Sigmoid colon (tissue), 7 donors: ENCODE measurements at regions of chr11 and their contacts with region 1.

Region 1: GRCh38 chr11:95067039-95067840 is 521 bp downstream of the SRSF8 start:
- DNase-seq: peak; percentile 93
- H3K4me3 ChIP-seq: peak overlapping the region; percentile 71 to 83 (median 80)
- H3K27ac ChIP-seq: peak overlapping the region; percentile 91 to 99 (median 98)
- H3K4me1 ChIP-seq: peaks cover 0 to 20% (median 17%) of the 10 kb centered on the region in 4 donors
- H3K27me3 ChIP-seq: no peaks in the 10 kb centered on the region
- CTCF ChIP-seq: peak; percentile 52 to 74 (median 64)
- EP300 ChIP-seq: no peak
- POLR2A ChIP-seq: peak in 1 of 2 donors; percentile 50

Region 2: DNA sequence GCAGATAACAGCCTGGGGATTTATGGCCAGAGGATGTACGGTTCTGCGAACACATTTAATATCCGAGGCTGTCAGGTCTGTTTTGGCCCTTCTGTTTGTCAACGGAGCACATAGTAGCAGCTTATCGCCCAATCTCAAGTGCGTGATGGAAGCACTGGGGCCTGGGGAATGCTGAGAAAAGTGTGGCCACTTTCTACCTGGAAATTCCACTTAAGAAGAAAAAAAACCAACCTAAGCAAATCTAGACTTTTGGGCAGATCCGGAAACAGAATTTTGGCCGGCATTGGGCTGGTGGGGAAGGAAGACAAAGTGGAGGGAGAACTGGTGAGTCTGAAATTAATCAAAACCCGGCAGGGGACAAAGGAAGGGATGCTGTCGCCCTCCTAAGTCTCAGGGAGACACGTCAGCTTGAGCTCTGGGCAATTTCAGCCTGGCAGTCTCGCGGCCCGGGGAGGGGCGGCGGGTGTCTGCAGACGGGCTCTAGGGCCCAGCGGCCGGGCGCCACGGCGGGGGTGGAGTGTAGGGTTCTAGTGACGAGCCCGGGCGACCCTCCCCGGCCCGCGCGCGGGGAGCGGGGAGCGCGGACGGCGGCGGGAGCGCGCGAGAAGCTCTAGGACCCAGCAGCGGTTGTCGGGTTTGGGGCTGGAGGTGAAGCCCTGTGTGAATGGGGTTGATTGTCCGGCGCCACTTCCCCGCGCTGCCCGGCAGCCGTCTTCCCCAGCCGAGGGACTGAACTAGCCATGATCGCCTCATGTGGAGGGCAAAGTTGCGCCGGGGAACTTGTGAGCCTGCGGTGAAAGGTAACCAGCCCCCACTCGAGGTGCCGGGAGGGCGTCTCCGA is 299.3 kb before region 1 on chr11 and contains the start of gene AMOTL1:
- intact Hi-C with region 1: loop called (anchors 5 kb)
- DNase-seq: peak; percentile 96
- H3K4me3 ChIP-seq: peak within 1 kb of the TSS; percentile 84 to 95 (median 91)
- H3K27ac ChIP-seq: peak within 1 kb of the TSS; percentile 97 to 99 (median 98)
- H3K4me1 ChIP-seq: peaks cover 0 to 77% (median 59%) of the 10 kb centered on the region in 4 donors
- H3K27me3 ChIP-seq: no peaks in the 10 kb centered on the region
- CTCF ChIP-seq: no peak
- EP300 ChIP-seq: peak in 2 of 4 donors; percentile 7 to 61
- POLR2A ChIP-seq: peak in 1 of 2 donors; percentile 74
- total RNA-seq, gene AMOTL1: 96.3 to 161 (median 115) TPM

Region 3: DNA sequence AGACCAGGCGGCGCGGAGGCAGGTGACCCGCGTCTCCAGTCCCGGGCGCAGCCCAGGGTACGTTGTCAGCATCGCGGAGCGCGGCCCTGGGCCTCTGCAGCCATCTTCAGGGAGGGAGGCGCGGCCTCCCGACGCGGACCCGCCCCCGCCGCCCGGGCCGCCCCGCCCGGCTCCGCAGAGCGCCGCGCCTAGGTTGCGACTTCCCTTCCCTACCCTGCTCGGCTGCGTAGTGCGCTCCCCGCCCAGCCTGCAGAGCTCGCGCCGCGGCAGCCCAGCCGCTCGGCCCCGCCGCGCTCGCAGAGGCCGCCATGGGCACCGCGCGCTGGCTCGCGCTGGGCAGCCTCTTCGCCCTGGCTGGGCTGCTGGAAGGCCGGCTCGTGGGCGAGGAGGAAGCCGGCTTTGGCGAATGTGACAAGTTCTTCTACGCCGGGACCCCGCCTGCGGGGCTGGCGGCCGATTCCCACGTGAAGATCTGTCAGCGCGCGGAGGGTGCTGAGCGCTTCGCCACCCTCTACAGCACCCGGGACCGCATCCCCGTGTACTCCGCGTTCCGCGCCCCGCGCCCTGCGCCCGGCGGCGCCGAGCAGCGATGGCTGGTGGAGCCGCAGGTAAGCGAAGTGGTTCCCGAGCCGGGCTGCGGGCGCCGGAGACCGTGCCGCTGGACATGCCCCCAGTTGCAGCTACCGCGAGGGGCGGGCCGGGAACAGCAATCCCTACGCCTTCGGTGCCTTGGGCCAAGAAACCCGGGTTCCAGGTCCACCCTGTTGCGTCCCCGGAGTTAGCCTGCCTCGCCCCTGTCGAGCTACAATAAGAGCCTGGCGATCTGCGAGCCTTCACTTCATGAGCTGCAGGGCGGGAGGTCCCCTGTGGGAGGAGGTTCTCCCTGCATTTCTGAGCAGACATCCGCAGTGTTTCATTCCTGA is 22.6 kb after region 1 on chr11 and contains the start of gene ENDOD1:
- intact Hi-C with region 1: loop called (anchors 1 kb)
- DNase-seq: peak; percentile 88
- H3K4me3 ChIP-seq: peak within 1 kb of the TSS; percentile 64 to 99 (median 78)
- H3K27ac ChIP-seq: peak within 1 kb of the TSS; percentile 85 to 97 (median 92)
- H3K4me1 ChIP-seq: peaks cover 0 to 19% (median 11%) of the 10 kb centered on the region in 4 donors
- H3K27me3 ChIP-seq: no peaks in the 10 kb centered on the region
- CTCF ChIP-seq: no peak
- EP300 ChIP-seq: no peak
- POLR2A ChIP-seq: peak in 1 of 2 donors; percentile 30
- total RNA-seq, gene ENDOD1: 18.1 to 31.4 (median 21.0) TPM

Region 4: DNA sequence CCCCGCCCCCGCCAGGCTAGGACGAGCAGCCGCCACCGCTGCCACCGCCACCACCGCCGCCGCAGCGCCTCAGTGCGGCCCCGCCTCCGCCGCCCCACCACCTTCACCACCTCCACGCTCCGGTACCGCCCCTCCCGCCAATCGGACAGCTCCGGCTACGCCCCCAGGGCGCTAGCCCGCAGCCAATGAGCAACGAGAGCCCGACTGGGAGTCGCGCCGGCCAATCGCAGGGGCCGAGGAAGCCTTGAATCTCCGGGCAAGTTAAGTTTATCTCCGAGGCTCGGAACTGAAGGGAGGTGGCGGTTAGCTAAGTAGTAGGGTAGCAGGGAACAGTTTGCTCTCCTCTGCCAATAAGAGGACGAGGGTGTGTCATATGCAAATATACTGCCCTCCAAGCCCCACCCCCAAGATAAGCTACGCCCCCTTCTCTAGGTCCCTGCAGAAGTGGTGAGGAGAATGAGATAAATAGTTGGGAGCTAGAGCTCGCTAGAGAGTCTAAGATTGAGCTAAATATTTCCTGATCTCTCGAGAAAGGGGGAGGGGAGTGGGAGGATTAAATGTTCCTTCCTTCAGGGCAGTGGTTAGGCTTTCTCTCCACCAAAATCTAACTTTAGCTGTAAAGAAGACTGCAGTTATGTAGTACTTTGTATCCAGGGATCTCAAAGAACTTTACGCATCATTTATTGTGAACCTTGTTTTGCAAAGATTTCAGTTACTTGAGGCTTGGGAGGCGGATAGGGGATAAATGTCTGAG is 164.1 kb after region 1 on chr11 and contains the start of gene SESN3:
- intact Hi-C with region 1: loop called (anchors 5 kb)
- DNase-seq: peak; percentile 99
- H3K4me3 ChIP-seq: peak within 1 kb of the TSS; percentile 61 to 85 (median 72)
- H3K27ac ChIP-seq: peak within 1 kb of the TSS; percentile 75 to 88 (median 80)
- H3K4me1 ChIP-seq: peaks cover 0 to 21% (median 13%) of the 10 kb centered on the region in 4 donors
- H3K27me3 ChIP-seq: peaks cover 0 to 3% (median 0%) of the 10 kb centered on the region in 3 donors
- CTCF ChIP-seq: no peak
- EP300 ChIP-seq: no peak
- POLR2A ChIP-seq: peak; percentile 29 to 41
- total RNA-seq, gene SESN3: 8.7 to 20.8 (median 16.6) TPM

Region 5: GRCh38 chr11:95705485-95706124 is 638.4 kb after region 1 on chr11:
- intact Hi-C with region 1: loop called (anchors 2 kb)
- DNase-seq: peak; percentile 94
- H3K4me3 ChIP-seq: no peak overlapping the region
- H3K27ac ChIP-seq: peak overlapping the region; percentile 37 to 69 (median 48)
- H3K4me1 ChIP-seq: peaks cover 0 to 41% (median 35%) of the 10 kb centered on the region in 4 donors
- H3K27me3 ChIP-seq: no peaks in the 10 kb centered on the region
- CTCF ChIP-seq: peak; percentile 86 to 91 (median 88)
- EP300 ChIP-seq: no peak
- POLR2A ChIP-seq: no peak

Region 6: GRCh38 chr11:95790123-95790932 is 723.1 kb after region 1 on chr11 and contains the start of gene CEP57:
- intact Hi-C with region 1: loop called (anchors 5 kb)
- DNase-seq: peak; percentile 98
- H3K4me3 ChIP-seq: peak within 1 kb of the TSS; percentile 70 to 91 (median 88)
- H3K27ac ChIP-seq: peak within 1 kb of the TSS; percentile 96 to 99 (median 98)
- H3K4me1 ChIP-seq: peaks cover 0 to 28% (median 22%) of the 10 kb centered on the region in 4 donors
- H3K27me3 ChIP-seq: no peaks in the 10 kb centered on the region
- CTCF ChIP-seq: no peak
- EP300 ChIP-seq: no peak
- POLR2A ChIP-seq: peak; percentile 43 to 45
- total RNA-seq, gene CEP57: 35.8 to 71.3 (median 41.0) TPM